Tibial artery (tissue), 4 donors: ENCODE measurements at regions of chr2 and their contacts with region 1.

Region 1: GRCh38 chr2:167028505-167028904 is 140.2 kb downstream of the XIRP2 start:
- DNase-seq: no peak
- H3K4me3 ChIP-seq: no peak overlapping the region
- H3K27ac ChIP-seq: no peak overlapping the region
- H3K4me1 ChIP-seq: no peaks in the 10 kb centered on the region
- H3K27me3 ChIP-seq: no peaks in the 10 kb centered on the region
- CTCF ChIP-seq: no peak

Region 2: DNA sequence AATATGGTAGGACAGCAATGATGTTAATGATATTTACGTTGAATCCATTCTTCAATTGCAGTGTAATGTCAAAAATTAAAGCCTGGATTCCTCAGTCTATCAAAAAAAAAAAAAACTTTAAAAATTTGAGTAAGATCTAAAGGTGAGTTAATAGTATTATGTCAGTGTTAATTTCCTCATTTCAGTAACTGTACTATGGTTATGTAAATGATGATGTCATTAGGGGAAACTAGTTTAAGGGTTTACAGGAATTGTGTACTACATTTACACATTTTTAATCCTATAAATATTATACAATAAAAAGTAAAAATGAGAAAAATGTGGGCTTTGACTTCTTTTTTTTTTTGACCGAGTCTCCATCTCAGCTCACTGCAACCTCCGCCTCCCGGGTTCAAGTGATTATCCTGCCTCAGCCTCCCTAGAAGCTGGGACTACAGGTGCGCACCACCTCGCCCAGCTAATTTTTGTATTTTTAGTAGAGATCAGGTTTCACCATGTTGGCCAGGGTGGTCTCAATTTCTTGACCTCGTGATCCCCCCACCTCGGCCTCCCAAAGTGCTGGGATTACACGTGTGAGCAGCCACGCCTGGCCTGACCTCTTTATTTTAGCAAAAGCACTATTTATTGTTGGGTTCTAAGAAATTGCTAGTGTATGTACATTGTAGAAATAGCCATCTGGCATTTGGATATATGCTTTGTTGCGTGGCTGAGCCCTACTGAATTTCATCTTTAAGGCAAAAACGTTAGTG is 33.7 kb before region 1 on chr2:
- intact Hi-C with region 1: no loop called
- DNase-seq: no peak
- H3K4me3 ChIP-seq: no peak overlapping the region
- H3K27ac ChIP-seq: no peak overlapping the region
- H3K4me1 ChIP-seq: no peaks in the 10 kb centered on the region
- H3K27me3 ChIP-seq: no peaks in the 10 kb centered on the region
- CTCF ChIP-seq: no peak

Region 3: GRCh38 chr2:167103028-167103756 is 74.7 kb after region 1 on chr2:
- intact Hi-C with region 1: loop called (anchors 5 kb)
- DNase-seq: no peak
- H3K4me3 ChIP-seq: no peak overlapping the region
- H3K27ac ChIP-seq: no peak overlapping the region
- H3K4me1 ChIP-seq: no peaks in the 10 kb centered on the region
- H3K27me3 ChIP-seq: no peaks in the 10 kb centered on the region
- CTCF ChIP-seq: no peak